HEK293T (cell line): ENCODE measurements at regions of chr17 and their contacts with region 1.

Region 1: DNA sequence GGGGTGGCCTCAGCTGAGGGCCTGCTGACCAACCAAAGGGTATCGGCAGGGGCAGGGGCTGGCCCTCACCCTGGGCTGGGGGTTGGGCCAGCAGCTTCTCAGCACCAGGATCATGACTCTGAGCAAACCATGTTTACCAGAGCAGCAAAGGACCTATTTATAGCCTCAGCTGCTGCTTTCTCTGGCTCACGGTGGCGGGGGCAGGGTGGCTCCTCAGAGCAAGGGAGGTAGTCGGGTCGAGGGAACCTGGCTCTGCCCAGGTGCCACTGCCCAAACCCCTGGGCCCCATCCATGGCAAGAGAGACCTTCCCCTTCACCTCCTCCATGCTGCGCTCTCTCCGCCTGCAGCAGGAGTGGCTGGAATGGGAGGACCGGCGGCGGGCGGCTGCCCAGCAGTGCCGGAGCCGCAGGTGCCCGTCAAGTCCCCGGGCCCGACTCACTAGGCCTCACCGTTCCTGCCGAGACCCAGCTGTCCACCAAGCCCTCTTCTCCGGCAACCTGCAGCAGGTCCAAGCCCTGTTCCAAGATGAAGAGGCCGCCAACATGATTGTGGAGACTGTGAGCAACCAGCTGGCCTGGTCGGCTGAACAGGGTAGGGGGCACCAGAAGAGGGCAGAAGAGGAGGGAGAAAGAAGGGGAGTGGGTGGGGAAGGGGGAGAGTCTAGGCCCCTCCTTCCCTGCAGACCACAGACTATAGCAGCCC is at the start of gene ASB16:
- DNase-seq: no peak

Region 2: GRCh38 chr17:44110823-44111633 is 59.6 kb before region 1 on chr17:
- CTCF ChIA-PET with region 1: interaction called, 10 read pairs
- POLR2A ChIA-PET with region 1: no interaction called
- DNase-seq: peak; percentile 77

Region 3: DNA sequence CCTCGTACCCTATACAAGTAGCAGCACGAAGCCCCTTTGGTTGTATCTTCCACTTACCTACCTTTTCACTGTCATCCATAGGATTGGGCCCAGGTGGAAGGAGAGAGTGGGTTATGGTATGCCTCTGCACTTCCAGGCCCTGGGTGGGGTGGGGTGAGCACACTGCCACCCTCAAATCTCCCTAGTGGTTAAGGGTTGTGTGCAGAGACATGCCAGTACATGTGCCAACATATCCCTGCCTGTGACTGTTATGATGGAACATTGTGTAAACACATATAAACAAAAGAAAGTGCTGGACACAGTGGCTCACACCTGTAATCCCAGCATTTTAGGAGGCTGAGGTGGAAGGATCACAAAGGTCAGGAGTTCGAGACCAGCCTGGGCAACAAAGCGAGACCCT is 17.8 kb before region 1 on chr17:
- CTCF ChIA-PET with region 1: interaction called, 17 read pairs
- POLR2A ChIA-PET with region 1: interaction called, 4 read pairs
- DNase-seq: no peak

Region 4: GRCh38 chr17:44159519-44160210 is 11.0 kb before region 1 on chr17:
- CTCF ChIA-PET with region 1: interaction called, 13 read pairs
- POLR2A ChIA-PET with region 1: interaction called, 4 read pairs
- DNase-seq: no peak

Region 5: GRCh38 chr17:44186307-44187130 is 15.9 kb after region 1 on chr17 and contains the start of gene TMUB2:
- CTCF ChIA-PET with region 1: interaction called, 11 read pairs
- POLR2A ChIA-PET with region 1: interaction called, 9 read pairs
- DNase-seq: peak; percentile 100